H1 (cell line): ENCODE measurements at regions of chr10 and their contacts with region 1.

Region 1: DNA sequence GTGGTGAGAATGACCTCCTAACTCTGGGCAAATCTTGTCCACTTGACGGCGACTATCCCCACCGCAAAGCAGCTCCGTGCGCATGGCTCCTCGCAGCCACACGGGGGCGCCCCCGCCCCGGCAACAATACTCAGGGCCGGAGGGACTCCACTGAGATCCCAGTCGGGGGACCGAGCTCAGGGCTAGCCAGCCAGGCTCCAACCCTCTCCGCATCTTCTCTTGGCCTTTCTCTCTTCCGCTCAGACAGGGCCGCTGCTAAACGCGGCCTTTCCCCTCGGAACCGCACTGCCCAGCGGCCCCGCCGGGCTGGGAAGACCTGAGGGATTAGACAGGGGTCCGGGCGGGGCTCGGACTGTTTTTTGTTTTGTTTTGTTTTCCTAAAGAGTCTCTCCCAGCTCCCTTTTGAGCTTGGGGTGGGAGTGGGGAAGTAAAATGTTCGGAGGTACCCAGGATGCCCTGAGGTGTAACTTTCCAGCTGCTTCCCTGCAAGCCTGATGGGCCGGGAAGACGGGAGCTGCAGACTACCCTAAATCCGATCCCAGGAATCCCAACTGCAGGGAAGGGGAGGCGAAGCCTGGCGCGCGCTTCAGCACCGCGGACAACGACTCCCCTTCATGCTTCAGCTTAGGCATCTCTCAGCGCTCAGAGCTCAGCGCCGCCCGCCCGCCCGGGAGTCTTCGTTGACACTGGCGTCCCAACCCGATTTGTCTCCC is 2.7 kb downstream of the KCNIP2 start:
- DNase-seq: peak in 1 of 2 experiments; percentile 96
- H3K4me3 ChIP-seq: peak overlapping the region; percentile 70 to 81 (median 76); a peak in 7 of 8 replicates
- H3K27ac ChIP-seq: no peak overlapping the region
- H3K4me1 ChIP-seq: peaks cover 3 to 21% (median 12%) of the 10 kb centered on the region in 4 experiments
- H3K27me3 ChIP-seq: peaks cover 3 to 18% (median 18%) of the 10 kb centered on the region in 4 experiments
- CTCF ChIP-seq: peak; percentile 97 to 99 (median 98)
- EP300 ChIP-seq: no peak
- POLR2A ChIP-seq: no peak
- RAD21 ChIP-seq: peak; percentile 91 to 93

Region 2: DNA sequence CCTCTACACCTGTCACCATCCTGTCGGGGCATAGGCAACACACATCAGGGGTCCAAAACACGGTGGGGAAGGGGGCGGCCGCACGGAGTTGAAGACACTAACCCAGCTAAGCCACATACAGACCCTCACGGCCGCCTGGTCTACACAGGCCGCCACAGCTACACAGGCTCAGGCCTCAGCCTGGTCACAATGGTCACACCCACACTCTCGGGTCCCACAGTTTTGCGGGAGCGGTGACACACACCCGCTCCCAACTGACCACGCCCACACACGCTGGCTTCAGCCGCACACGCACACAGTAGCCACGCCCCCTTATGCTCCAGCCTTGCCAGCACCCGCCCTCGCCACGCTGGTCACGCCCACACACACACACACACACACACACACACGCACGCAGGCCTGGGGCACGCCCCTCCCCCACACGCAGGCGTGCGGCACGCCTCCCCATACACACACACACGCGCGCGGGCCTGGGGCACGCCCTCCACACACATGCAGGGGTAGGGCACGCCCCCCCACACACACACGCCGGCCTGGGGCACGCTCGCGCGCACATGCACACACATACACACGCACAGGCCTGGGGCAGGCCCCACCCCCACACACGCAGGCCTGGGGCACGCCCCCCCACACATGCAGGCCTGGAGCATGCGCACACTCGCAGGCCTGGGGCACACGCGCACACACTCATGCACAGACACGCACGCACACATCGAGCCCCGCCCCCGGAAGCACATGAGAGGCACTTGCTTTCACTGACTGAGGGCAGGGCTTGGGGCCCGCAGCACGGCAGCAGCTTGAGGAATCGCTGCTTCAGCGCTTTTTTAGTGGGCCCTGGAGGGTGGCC is 10.4 kb before region 1 on chr10:
- CTCF ChIA-PET with region 1: interaction called, 24 read pairs
- POLR2A ChIA-PET with region 1: interaction called, 12 read pairs
- DNase-seq: peak in 1 of 2 experiments; percentile 90
- H3K4me3 ChIP-seq: peak overlapping the region; percentile 44 to 66 (median 48)
- H3K27ac ChIP-seq: no peak overlapping the region
- H3K4me1 ChIP-seq: peaks cover 9 to 22% (median 17%) of the 10 kb centered on the region in 4 experiments
- H3K27me3 ChIP-seq: no peaks in the 10 kb centered on the region
- CTCF ChIP-seq: no peak
- EP300 ChIP-seq: no peak
- POLR2A ChIP-seq: no peak
- RAD21 ChIP-seq: no peak

Region 3: GRCh38 chr10:101889256-101890210 is 48.6 kb after region 1 on chr10:
- CTCF ChIA-PET with region 1: interaction called, 46 read pairs
- POLR2A ChIA-PET with region 1: no interaction called
- DNase-seq: peak; percentile 43 to 85
- H3K4me3 ChIP-seq: no peak overlapping the region
- H3K27ac ChIP-seq: no peak overlapping the region
- H3K4me1 ChIP-seq: no peaks in the 10 kb centered on the region
- H3K27me3 ChIP-seq: no peaks in the 10 kb centered on the region
- CTCF ChIP-seq: peak; percentile 26 to 90 (median 81)
- EP300 ChIP-seq: no peak
- POLR2A ChIP-seq: no peak
- RAD21 ChIP-seq: peak; percentile 86 to 94

Region 4: DNA sequence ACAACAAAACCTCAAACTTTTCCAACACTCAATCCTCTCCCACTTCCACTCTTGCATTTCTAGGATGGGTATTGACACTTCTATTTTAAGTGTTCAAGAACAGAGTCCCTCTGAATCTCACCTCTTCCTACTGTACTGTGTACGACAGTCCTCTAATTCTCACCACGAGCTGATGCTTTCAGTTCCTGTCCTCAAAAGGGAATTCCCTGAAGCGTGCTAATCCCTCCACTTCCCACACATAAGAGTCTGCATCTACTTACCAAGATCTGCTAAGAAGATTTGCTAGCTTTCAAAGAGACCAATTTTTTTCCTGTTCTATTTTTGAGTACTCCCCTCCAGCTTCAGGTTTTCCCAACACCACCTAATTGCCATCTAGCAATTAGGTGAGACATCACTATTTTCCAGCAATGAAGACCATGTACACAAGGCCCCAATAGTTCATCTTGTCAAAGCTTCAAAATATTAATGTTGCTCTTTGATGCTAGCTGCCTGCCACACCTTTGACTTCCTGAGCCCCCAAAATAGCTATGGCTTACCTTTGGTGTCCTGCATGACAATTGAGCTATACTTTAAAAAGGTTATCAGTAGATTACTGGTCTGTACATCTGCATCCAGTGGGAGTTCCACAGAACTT is 160.7 kb after region 1 on chr10:
- CTCF ChIA-PET with region 1: interaction called, 154 read pairs
- POLR2A ChIA-PET with region 1: no interaction called
- DNase-seq: no peak
- H3K4me3 ChIP-seq: no peak overlapping the region
- H3K27ac ChIP-seq: no peak overlapping the region
- H3K4me1 ChIP-seq: no peaks in the 10 kb centered on the region
- H3K27me3 ChIP-seq: no peaks in the 10 kb centered on the region
- CTCF ChIP-seq: no peak
- EP300 ChIP-seq: no peak
- POLR2A ChIP-seq: no peak
- RAD21 ChIP-seq: no peak

Region 5: GRCh38 chr10:102024799-102025198 is 183.9 kb after region 1 on chr10:
- CTCF ChIA-PET with region 1: interaction called, 14 read pairs
- POLR2A ChIA-PET with region 1: no interaction called
- DNase-seq: no peak
- H3K4me3 ChIP-seq: no peak overlapping the region
- H3K27ac ChIP-seq: no peak overlapping the region
- H3K4me1 ChIP-seq: no peaks in the 10 kb centered on the region
- H3K27me3 ChIP-seq: no peaks in the 10 kb centered on the region
- CTCF ChIP-seq: no peak
- EP300 ChIP-seq: no peak
- POLR2A ChIP-seq: no peak
- RAD21 ChIP-seq: no peak

Region 6: GRCh38 chr10:102072673-102073527 is 232.0 kb after region 1 on chr10:
- CTCF ChIA-PET with region 1: interaction called, 33 read pairs
- POLR2A ChIA-PET with region 1: interaction called, 3 read pairs
- DNase-seq: peak in 1 of 2 experiments; percentile 94
- H3K4me3 ChIP-seq: no peak overlapping the region
- H3K27ac ChIP-seq: no peak overlapping the region
- H3K4me1 ChIP-seq: 0 out of 7 replicates have a peak, but pooled peaks cover 0 to 2% (median 0%) of the 10 kb centered on the region in 4 experiments
- H3K27me3 ChIP-seq: no peaks in the 10 kb centered on the region; a peak in 1 of 7 replicates
- CTCF ChIP-seq: peak; percentile 89 to 95 (median 90)
- EP300 ChIP-seq: no peak
- POLR2A ChIP-seq: no peak
- RAD21 ChIP-seq: peak; percentile 86 to 89